ENCODE measurements at regions of chr1 and their contacts with region 1.

Region 1: GRCh38 chr1:191876631-191877030 is 281.6 kb upstream of the RGS18 start:
- DNase-seq: no peak
- ATAC-seq: no peak

Region 2: GRCh38 chr1:191953526-191953925 is 76.9 kb after region 1 on chr1:
- intact Hi-C with region 1: loop called (anchors 2 kb)
- DNase-seq: no peak
- ATAC-seq: no peak